Calu3 (cell line): ENCODE measurements at regions of chr6 and their contacts with region 1.

Region 1: DNA sequence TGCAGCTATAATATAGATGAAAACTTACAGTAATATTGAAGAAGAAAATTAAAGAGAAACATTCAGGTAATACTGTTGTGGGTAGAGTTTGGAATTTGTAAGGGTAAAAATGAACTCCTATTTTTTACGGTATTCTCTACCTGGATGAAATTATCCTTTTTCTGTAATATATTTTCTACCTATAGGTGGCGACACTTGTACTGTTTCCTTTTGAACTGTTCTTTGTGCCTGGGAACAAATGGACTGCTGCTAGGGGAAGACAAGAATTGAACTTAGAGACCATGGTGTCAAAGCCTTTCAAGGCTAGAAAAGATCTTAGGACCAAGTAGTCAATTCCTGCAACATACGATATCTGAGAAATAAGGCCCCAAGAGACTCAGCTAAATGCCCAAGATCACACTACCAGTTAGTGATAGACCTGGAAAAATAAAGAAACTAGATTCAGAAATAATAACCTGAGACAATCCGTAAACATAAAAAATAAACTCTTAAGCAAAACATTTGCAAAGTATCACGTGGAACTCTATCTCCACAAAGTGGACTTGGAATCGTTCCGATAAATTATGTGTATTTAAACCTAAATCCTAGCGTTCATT is 383.8 kb downstream of the TFAP2A start:
- DNase-seq: no peak
- H3K4me3 Mint-ChIP-seq: no peak overlapping the region
- H3K27ac Mint-ChIP-seq: no peak overlapping the region
- H3K4me1 Mint-ChIP-seq: peaks cover 7% of the 10 kb centered on the region
- H3K27me3 Mint-ChIP-seq: no peaks in the 10 kb centered on the region
- CTCF ChIP-seq: peak; percentile 46

Region 2: GRCh38 chr6:9581155-9581554 is 449.9 kb before region 1 on chr6:
- CTCF ChIA-PET with region 1: no interaction called
- intact Hi-C with region 1: no loop called
- DNase-seq: no peak
- H3K4me3 Mint-ChIP-seq: no peak overlapping the region
- H3K27ac Mint-ChIP-seq: no peak overlapping the region
- H3K4me1 Mint-ChIP-seq: no peaks in the 10 kb centered on the region
- H3K27me3 Mint-ChIP-seq: no peaks in the 10 kb centered on the region
- CTCF ChIP-seq: no peak

Region 3: DNA sequence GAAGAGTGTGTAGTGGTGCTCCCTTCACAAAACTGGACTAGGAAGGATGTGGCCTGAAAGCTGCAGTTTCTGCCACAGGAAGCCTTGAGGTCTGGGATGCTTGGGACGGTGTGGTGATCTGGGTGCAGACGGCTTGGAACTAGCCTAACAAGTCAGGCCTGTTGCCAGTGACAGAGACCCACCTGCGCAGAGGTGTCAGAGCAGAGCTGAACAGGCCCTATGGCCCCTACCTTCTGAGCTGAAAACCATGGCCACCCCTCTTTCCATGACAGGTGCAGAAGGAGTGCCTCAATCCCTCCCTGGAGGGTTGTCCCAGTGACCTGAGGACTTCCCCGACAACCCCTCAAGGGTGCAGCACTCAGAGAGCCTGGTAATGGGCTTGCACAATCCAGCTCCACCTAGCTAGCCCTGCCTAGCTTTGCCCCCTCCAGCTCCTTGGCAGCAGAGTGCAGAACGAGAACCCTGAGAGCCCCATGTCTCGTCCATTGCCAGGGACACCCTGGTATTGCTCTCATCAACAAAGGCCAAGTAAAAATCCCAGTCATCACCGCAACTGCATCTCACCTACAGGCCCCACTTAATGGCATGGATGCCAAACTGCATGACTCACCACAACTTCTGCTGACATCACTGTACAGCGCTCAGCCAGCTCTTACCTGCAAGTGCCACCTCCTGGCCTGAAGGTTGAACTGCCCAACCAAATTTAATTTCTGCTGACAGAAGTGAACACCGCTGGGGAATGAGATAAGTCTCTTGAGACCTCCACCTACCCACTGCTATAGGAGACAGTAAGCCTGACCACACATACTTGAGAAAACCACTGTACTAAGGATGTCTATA is 179.3 kb before region 1 on chr6:
- CTCF ChIA-PET with region 1: no interaction called
- intact Hi-C with region 1: loop called (anchors 10 kb)
- DNase-seq: peak; percentile 60
- H3K4me3 Mint-ChIP-seq: no peak overlapping the region
- H3K27ac Mint-ChIP-seq: no peak overlapping the region
- H3K4me1 Mint-ChIP-seq: no peaks in the 10 kb centered on the region
- H3K27me3 Mint-ChIP-seq: no peaks in the 10 kb centered on the region
- CTCF ChIP-seq: no peak

Region 4: DNA sequence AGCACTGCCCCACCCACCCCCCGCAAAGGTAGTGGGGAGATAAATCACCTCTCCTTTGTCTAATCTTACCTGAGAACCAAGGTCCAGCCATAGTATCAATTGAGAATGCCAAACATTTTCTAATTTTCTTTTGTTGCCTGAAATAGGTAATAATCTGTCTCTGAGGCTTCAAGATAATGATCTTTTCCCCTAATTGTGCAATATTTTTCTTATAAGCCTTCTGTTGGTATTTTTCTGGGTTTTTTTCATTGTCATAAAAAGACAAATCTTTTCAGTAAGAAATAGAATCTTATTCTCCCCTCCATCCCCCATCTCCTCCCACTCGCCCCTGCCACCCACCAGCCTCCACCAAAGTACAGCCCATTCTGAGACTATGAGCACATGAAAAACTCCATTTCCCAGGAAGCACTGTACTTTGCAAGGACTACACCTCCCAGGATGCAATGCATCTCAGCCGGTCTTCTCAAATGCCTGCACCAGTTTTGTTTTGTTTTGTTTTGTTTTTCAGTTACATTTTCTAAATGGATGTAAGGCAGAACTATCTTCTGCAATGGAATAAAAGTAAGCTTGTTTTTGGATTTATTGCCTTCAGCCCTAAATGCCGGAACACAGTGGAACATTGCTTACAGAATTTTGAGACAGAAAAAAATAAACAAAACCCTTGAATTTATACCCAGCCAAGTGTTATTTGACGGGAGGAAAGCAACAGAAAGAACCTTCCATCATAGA is 115.8 kb after region 1 on chr6:
- CTCF ChIA-PET with region 1: no interaction called
- intact Hi-C with region 1: loop called (anchors 5 kb)
- DNase-seq: peak; percentile 26
- H3K4me3 Mint-ChIP-seq: peak overlapping the region; percentile 61
- H3K27ac Mint-ChIP-seq: no peak overlapping the region
- H3K4me1 Mint-ChIP-seq: no peaks in the 10 kb centered on the region
- H3K27me3 Mint-ChIP-seq: no peaks in the 10 kb centered on the region
- CTCF ChIP-seq: no peak

Region 5: DNA sequence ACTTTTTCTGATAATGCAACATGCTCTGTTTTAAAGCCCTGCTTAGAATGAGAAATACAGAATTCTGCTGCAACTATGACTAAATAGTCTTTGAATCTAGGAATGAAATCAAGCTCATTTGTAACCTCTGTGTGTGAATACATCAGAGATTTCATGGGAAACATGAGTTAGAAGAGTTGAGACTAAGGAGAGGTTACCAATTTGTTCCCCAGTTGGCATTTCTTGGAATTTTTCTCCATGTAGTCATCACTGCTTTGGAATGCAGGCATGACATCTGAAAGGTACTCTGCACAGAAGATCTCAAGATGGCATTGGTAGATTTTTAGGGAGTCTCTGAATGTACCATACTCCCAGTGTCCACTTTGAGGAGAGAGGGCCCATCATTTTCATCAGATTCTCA is 146.7 kb after region 1 on chr6:
- CTCF ChIA-PET with region 1: no interaction called
- intact Hi-C with region 1: no loop called
- DNase-seq: no peak
- H3K4me3 Mint-ChIP-seq: no peak overlapping the region
- H3K27ac Mint-ChIP-seq: no peak overlapping the region
- H3K4me1 Mint-ChIP-seq: peaks cover 9% of the 10 kb centered on the region
- H3K27me3 Mint-ChIP-seq: no peaks in the 10 kb centered on the region
- CTCF ChIP-seq: no peak

Region 6: GRCh38 chr6:10310826-10311225 is 279.8 kb after region 1 on chr6:
- CTCF ChIA-PET with region 1: no interaction called
- intact Hi-C with region 1: loop called (anchors 5 kb)
- DNase-seq: peak; percentile 50
- H3K4me3 Mint-ChIP-seq: peak overlapping the region; percentile 43
- H3K27ac Mint-ChIP-seq: peak overlapping the region; percentile 92
- H3K4me1 Mint-ChIP-seq: peaks cover 34% of the 10 kb centered on the region
- H3K27me3 Mint-ChIP-seq: no peaks in the 10 kb centered on the region
- CTCF ChIP-seq: no peak

Region 7: DNA sequence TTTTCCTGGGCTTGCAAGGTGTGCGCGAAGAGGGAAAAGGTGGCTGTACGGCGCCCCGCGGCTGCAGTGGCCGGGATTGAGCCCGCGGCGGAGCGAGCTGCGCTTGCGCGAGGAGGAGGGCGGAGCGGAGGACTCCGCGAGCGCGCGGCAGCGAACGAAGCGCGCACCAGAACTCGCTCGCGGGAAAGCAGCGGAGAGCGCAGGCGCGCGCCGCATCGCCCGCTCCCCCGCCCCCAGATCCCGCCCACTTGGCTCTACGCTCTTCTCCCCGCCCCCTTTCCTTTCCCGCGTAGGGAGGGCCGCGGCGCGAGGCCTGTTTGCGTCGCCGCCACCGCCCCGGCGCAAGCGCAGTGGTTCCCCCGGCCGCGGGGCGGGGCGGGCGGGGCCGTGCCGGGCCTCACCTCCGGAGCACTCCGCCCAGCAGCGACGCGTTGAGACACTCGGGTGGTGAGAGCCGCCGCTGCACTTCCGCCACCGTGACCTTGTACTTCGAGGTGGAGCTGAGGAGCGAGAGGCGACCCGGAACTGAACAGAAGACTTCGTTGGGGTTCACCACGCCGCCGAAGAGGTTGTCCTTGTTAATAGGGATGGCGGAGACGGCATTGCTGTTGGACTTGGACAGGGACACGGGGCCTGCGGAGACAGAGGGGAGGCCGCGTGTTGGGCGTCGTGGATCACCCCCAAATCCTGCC is 373.2 kb after region 1 on chr6:
- CTCF ChIA-PET with region 1: interaction called, 3 read pairs
- intact Hi-C with region 1: loop called (anchors 1 kb)
- DNase-seq: peak; percentile 93
- H3K4me3 Mint-ChIP-seq: peak overlapping the region; percentile 92
- H3K27ac Mint-ChIP-seq: peak overlapping the region; percentile 93
- H3K4me1 Mint-ChIP-seq: peaks cover 28% of the 10 kb centered on the region
- H3K27me3 Mint-ChIP-seq: no peaks in the 10 kb centered on the region
- CTCF ChIP-seq: no peak